Posterior vena cava (tissue), 2 donors: ENCODE measurements at regions of chr20 and their contacts with region 1.

Region 1: GRCh38 chr20:18014411-18014810 is 43.3 kb downstream of the OVOL2 start:
- DNase-seq: no peak

Region 2: GRCh38 chr20:17985388-17986018 is 28.9 kb before region 1 on chr20:
- intact Hi-C with region 1: no loop called
- DNase-seq: no peak

Region 3: DNA sequence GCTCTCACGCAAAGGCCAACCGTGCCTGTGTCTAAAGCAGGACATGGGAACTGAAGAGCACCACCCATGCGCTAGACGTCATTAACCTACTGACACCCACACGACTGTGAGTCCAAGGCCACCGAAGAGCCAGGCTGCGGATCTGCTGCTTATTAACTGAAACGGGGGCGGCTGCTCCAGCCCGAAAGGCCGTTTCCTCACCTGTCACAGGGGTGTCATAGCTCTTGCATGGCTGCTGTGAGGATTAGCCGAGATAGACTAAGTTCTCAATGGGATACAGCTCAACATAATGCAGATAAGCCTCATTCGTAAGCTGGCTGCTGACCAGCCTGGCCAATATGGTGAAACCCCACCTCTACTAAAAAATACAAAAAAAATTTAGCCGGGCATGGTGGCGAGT is 16.6 kb after region 1 on chr20:
- intact Hi-C with region 1: loop called in 1 of 2 experiments (anchors 1 kb)
- DNase-seq: no peak

Region 4: DNA sequence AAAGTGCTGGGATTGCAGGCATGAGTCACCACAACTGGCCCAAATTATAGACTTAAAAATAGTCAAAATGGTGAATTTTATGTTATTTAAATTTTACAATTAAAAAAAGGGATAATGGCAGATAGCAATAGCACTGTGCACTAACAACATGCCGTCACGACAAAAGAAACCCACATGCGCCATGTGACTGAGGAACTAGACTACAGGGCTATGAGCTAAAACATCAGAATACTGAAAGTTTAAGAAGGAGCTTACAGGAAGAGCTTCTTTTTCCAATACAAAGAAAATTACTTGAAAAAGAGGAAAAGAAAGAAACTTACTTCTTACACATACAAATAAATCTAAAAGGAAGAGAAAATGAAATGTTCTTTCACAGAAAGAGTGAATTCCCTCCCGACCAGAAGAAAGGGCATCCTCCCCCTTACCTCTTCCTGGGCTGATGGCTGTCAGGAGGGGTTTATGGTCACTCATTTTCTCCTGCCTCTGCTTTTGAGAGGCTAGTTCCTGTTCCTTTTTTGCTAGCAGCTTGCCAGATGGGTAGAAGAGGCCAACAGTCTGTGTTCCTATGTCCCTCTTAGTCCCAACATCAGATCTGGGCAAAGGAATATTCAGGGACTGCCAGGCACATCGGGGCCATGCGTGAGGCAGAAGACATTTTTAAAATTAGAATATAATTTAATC is 397.9 kb after region 1 on chr20:
- intact Hi-C with region 1: no loop called
- DNase-seq: no peak